H1 (cell line): ENCODE measurements at regions of chr9 and their contacts with region 1.

Region 1: GRCh38 chr9:133429641-133430161 is 7.5 kb downstream of the ADAMTS13 start:
- DNase-seq: peak in 1 of 2 experiments; percentile 88
- H3K4me3 ChIP-seq: peak overlapping the region; percentile 39 to 65 (median 44)
- H3K27ac ChIP-seq: no peak overlapping the region
- H3K4me1 ChIP-seq: peaks cover 0 to 4% (median under 1%) of the 10 kb centered on the region in 4 experiments; a peak in 3 of 7 replicates
- H3K27me3 ChIP-seq: peaks cover 0 to 11% (median 4%) of the 10 kb centered on the region in 4 experiments; a peak in 5 of 7 replicates
- CTCF ChIP-seq: peak in 2 of 3 experiments; percentile 55 to 68; a peak in 3 of 4 replicates
- EP300 ChIP-seq: no peak
- POLR2A ChIP-seq: no peak
- RAD21 ChIP-seq: peak; percentile 1 to 29; a peak in 2 of 4 replicates

Region 2: DNA sequence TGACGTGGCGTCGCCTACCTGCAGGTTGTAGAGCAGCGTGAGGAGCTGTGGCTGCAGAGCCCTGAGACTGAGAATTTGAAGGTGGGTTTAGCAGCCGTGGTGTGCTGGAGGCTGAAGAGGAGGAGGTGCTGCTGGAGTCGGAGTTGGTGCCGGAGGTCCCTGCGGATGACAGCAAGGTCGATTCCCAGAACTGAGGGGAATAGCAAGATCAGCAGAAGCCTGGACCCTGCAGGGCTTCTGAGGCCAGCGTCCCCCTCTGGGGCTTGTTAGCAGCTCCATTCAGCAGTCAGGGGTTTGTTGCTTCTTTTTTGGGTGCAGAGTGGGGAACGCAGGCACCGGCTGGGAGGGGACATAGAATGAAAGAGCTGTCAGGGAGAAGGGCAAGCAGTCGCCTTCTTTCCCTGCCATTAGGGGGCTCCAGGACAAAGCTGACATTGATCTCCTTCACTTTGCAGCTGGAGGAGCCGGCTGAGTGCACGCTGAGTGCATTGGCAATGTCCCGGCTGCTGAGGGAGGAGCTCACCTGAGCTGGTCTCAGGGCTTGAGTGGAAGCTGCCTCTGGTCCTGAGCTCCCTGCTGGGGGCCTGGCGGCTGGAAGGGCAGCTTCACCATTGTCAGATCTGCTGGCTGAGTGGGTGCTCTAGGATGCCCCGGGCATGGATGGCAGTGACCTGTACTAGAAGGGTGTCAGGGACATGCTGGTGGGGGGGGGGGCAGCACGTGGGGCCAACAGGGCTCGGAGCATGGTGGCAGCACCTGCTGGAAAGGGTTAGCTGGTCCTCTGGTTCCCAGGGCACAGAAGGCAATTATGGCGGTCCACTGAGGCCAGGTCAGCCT is 241.5 kb before region 1 on chr9:
- CTCF ChIA-PET with region 1: no interaction called
- POLR2A ChIA-PET with region 1: no interaction called
- DNase-seq: peak in 1 of 2 experiments; percentile 66
- H3K4me3 ChIP-seq: no peak overlapping the region
- H3K27ac ChIP-seq: no peak overlapping the region
- H3K4me1 ChIP-seq: no peaks in the 10 kb centered on the region
- H3K27me3 ChIP-seq: peaks cover 0 to 13% (median 9%) of the 10 kb centered on the region in 4 experiments; a peak in 4 of 7 replicates
- CTCF ChIP-seq: peak; percentile 60 to 86 (median 75)
- EP300 ChIP-seq: no peak
- POLR2A ChIP-seq: no peak
- RAD21 ChIP-seq: peak; percentile 60 to 66

Region 3: DNA sequence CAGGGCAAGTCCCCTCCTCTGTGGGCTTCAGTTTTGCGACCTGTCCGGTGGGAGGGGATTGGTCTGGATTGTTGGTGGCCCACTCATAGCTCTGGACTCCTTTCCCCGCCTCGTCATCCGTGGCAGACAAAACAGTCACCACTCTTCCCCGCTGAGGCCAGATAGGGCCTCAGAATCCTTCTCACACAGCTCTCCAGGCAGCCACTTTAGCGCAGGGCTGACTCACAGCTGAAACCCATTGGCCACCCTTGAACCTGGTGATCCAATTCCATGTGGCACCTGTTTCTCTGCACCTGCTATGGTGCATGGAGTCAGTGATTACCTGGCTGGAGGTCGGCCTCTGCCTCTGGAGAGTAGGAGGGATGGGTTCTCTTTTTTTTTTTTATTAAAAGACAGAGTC is 14.3 kb after region 1 on chr9:
- CTCF ChIA-PET with region 1: interaction called, 35 read pairs
- POLR2A ChIA-PET with region 1: interaction called, 8 read pairs
- DNase-seq: no peak
- H3K4me3 ChIP-seq: no peak overlapping the region
- H3K27ac ChIP-seq: no peak overlapping the region
- H3K4me1 ChIP-seq: no peaks in the 10 kb centered on the region
- H3K27me3 ChIP-seq: no peaks in the 10 kb centered on the region
- CTCF ChIP-seq: no peak
- EP300 ChIP-seq: no peak
- POLR2A ChIP-seq: no peak
- RAD21 ChIP-seq: no peak